ENCODE measurements at regions of chr15 and their contacts with region 1.

Region 1: GRCh38 chr15:49383266-49383665 is 39.8 kb upstream of the FGF7 start:
- DNase-seq: peak; percentile 84
- ATAC-seq: peak; percentile 98
- H3K4me3 ChIP-seq: no peak overlapping the region; the same call in 1 of the 2 replicates
- H3K27ac ChIP-seq: peak overlapping the region; percentile 46
- H3K4me1 ChIP-seq: peaks cover 19% of the 10 kb centered on the region
- H3K27me3 ChIP-seq: no peaks in the 10 kb centered on the region
- CTCF ChIP-seq: no peak

Region 2: DNA sequence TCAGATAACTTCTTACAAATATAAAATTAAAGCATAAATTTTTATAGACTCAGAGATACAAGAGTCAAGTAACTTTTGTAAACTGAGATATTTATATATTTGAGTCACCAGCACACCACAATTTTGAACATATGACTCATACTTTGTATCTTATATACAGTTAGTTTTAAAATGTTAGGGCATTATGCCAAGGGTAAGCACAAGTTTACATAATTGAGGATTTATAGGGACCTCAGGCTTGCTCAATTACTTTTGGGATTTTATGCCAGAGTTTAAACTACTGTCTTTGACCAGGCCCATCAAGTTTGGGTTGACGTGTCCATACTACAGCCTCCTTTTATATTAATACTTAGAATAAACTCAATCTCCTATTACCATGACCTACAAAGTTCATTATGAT is 32.4 kb after region 1 on chr15:
- CTCF ChIA-PET with region 1: no interaction called
- POLR2A ChIA-PET with region 1: no interaction called
- intact Hi-C with region 1: loop called (anchors 5 kb)
- DNase-seq: peak; percentile 93
- ATAC-seq: peak; percentile 99
- H3K4me3 ChIP-seq: no peak overlapping the region
- H3K27ac ChIP-seq: peak overlapping the region; percentile 70
- H3K4me1 ChIP-seq: peaks cover 16% of the 10 kb centered on the region
- H3K27me3 ChIP-seq: no peaks in the 10 kb centered on the region
- CTCF ChIP-seq: no peak

Measured in PC-3 (cell line).